Left cardiac atrium (tissue), 4 donors: ENCODE measurements at regions of chr9 and their contacts with region 1.

Region 1: GRCh38 chr9:893843-894420 is 52.4 kb downstream of the DMRT1 start:
- DNase-seq: peak; percentile 41
- ATAC-seq: peak in 1 of 2 donors; percentile 81

Region 2: DNA sequence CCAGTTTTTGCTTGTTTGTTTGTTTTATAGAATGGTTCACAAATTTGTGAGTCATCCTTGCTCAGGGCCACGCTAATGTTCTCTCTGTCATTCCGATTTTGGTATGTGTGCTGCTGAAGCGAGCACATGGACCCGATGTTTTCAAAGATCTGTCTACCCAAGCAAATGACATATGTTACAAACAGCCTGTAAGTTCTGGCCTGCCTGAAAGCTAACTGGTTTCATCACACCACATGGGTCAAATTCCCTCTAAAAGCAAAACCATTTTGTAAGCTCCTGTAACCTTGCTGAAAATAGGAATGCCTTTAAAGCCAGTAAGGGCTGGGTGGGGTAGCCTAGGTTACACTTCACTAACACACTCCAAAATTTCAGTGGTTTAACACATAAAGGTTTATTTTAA is 107.9 kb after region 1 on chr9:
- intact Hi-C with region 1: loop called in 1 of 2 experiments (anchors 5 kb)
- DNase-seq: no peak
- ATAC-seq: no peak

Region 3: DNA sequence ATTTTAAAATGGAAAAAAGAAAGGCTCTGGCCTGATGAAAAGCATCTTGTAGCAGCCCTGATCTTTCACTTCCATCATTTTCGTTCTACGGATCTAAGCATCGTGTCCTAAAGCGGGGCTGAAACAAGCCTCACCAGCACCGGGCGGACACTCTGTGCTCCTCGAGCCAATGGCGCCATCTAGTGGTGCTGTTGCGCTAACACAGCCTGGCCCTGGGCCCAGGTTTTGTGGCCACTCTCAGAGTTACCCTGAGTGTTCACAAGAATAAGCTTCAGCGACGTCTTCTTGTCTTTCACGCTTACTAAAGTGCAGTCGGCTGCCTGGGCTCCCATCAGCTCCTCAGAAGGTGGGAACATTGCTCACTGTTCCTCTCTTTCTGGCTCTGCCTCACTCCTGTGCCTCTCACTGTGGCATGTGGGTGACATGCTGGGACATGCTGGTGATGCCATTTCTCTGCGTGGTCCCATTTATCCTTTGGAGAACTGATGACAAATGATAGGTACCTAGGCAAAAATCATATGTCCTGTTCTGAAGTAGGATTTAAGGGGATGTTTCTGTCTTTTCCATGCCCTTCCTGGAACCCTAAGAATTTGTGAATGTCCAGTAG is 115.3 kb after region 1 on chr9:
- intact Hi-C with region 1: loop called (anchors 2 to 5 kb)
- DNase-seq: peak; percentile 77
- ATAC-seq: peak; percentile 96 to 97

Region 4: GRCh38 chr9:2241836-2242741 is 1348.2 kb after region 1 on chr9:
- intact Hi-C with region 1: no loop called
- DNase-seq: peak; percentile 80
- ATAC-seq: peak; percentile 93 to 97